Activated T-helper 2 cell treated with anti-CD3 and anti-CD28 coated beads, Interferon-gamma antibody, Interleukin-2, Interleukin-4, amounts not matched to agents 10 μg/mL and 5 μg/mL and 100 μg/mL, durations not matched to agents 14 hours and 24 hours and 36 hours (primary cell): ENCODE measurements at regions of chr5 and their contacts with region 1.

Region 1: DNA sequence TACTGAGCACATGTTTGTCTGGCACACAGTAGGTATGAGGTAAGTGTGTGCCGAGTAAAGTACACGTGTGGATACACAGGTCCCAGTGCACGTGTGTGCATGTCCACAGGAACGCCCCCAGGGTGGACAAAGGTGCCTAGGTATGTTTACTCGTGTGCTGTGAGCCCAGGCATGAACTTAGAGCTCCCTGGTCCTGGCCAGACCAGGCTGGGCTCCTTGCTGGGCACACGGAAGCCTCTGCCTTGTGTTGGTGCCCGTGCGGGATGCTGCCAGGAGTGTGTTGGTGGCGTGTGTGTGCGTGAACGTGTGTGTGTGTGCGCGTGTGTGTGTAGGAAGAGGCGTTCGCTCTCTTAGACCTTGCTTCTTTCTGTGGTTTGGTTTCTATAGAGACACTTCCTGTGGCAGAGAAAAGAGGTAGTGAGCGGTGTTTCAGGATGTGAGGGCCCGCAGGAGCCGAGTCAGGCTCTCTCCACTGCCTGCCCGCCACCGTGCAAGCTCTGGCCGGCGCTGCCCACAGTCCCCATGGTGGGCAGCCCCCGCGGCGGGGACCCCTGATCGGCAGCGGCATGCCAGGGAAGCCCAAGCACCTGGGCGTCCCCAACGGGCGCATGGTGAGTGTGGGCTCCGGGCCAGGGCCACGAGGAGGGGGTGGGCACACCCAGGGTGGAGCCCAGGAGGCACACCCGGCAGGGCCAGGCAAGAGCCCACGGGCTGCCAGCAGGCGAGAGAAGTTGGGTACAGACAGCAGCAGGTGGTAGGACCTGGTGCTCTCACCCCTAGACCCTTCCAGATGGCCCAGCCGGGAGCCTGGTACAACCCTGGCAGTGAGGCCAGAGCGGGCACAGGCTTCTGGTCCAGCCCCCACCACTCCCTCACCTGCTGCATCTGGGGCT is at the start of gene RGS14:
- DNase-seq: peak; percentile 72
- H3K4me3 Mint-ChIP-seq: peak within 1 kb of the TSS; percentile 88
- H3K27ac Mint-ChIP-seq: peak within 1 kb of the TSS; percentile 74
- H3K4me1 Mint-ChIP-seq: peaks cover 53% of the 10 kb centered on the region
- H3K27me3 Mint-ChIP-seq: no peaks in the 10 kb centered on the region
- total RNA-seq, gene RGS14: 36.2 and 40.5 TPM in 2 replicates

Region 2: DNA sequence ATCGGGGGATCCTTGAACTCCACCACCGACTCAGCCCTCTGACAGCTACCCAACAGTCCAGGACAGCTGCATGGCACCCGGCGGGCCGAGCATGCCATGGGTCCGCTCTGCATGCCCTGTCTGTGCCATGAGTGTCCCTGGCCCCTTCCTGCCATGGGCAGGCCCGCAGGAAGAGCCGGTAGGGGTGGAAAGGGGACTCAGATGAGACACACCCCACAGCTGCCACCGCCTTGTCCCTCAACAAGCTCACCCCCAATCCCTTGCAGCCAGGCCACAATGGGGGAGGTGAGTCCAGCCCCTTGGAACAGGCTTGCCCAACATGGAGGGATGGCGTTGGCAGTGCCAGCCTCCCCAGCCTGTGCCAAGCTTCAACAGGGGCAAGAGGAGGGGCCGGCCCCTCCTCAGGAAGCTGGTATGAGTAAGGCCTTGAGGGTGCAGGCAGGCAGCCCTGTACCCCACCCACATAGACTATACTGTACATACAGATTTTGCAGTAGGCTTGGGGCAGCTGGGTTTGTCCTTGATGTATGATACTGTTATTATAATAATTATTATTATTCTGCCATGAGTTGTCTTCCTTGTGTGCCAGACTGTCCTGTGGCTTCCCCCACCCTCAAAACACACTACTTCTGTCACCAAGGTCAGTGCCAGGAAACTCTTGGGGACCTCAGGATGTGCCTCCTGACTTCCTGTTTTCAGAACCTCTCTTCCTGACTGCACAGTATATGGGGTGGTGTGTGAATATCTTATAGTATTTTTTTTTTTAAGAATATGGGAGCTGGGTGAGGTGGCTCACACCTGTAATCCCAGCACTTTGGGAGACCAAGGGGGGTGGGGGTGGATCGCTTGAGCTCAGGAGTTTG is 14.6 kb after region 1 on chr5:
- intact Hi-C with region 1: loop called (anchors 2 kb)
- DNase-seq: no peak
- H3K4me3 Mint-ChIP-seq: peak overlapping the region; percentile 54
- H3K27ac Mint-ChIP-seq: peak overlapping the region; percentile 82
- H3K4me1 Mint-ChIP-seq: peaks cover 30% of the 10 kb centered on the region
- H3K27me3 Mint-ChIP-seq: no peaks in the 10 kb centered on the region

Region 3: DNA sequence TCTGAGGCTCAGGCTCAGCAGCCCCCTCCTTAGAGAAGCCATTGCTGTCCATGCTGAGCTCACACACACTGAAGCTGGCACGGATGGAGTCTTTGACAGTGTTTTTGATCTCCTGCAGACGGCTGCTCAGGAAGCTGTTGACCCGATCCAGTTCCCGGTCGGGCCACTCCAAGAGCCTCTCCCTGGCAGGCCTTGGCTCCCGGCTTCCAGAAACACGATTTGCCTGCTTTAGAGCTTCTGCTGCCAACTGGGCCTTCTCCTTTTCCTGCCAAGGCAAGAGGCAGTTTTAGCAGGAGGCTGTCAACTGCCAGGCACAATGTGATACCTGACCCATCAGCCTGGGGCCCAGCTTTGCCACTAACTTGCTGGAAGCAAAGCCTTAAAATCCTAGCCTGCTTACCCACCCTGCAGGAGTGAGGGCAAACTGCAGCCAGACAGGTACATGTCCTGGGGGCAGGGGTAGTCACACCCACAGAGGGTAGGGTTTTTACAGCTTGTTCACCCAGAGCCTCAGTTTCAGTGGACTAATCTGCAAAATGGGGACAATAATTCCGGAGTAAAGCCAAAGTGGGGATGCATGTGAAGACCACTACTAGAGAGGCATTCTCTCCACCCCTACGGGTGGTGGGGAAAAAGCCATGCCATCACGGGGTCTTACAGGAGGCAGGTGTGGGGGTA is 167.4 kb after region 1 on chr5:
- intact Hi-C with region 1: no loop called
- DNase-seq: no peak
- H3K4me3 Mint-ChIP-seq: no peak overlapping the region
- H3K27ac Mint-ChIP-seq: no peak overlapping the region
- H3K4me1 Mint-ChIP-seq: peaks cover 7% of the 10 kb centered on the region
- H3K27me3 Mint-ChIP-seq: no peaks in the 10 kb centered on the region